ENCODE measurements at regions of chr10 and their contacts with region 1.

Region 1: GRCh38 chr10:103712570-103713498 is 142.5 kb downstream of the SH3PXD2A start:
- DNase-seq: peak; percentile 74 to 89
- ATAC-seq: peak; percentile 84 to 98 (median 95)
- H3K4me3 ChIP-seq: no peak overlapping the region
- H3K4me3 Mint-ChIP-seq: no peak overlapping the region
- H3K27ac ChIP-seq: no peak overlapping the region
- H3K27ac Mint-ChIP-seq: no peak overlapping the region
- H3K4me1 ChIP-seq: no peaks in the 10 kb centered on the region
- H3K4me1 Mint-ChIP-seq: no peaks in the 10 kb centered on the region
- H3K27me3 ChIP-seq: no peaks in the 10 kb centered on the region
- H3K27me3 Mint-ChIP-seq: no peaks in the 10 kb centered on the region
- CTCF ChIP-seq: peak; percentile 86

Region 2: GRCh38 chr10:103859161-103860086 is 146.6 kb after region 1 on chr10:
- intact Hi-C with region 1: loop called (anchors 1 kb)
- DNase-seq: peak; percentile 36 to 75
- ATAC-seq: peak in 2 of 3 donors; percentile 66 to 73
- H3K4me3 ChIP-seq: no peak overlapping the region
- H3K4me3 Mint-ChIP-seq: no peak overlapping the region
- H3K27ac ChIP-seq: no peak overlapping the region
- H3K27ac Mint-ChIP-seq: no peak overlapping the region
- H3K4me1 ChIP-seq: peaks cover 13% of the 10 kb centered on the region
- H3K4me1 Mint-ChIP-seq: peaks cover 0 to 14% of the 10 kb centered on the region in 2 donors
- H3K27me3 ChIP-seq: peaks cover 12% of the 10 kb centered on the region
- H3K27me3 Mint-ChIP-seq: peaks cover 18 to 20% of the 10 kb centered on the region in 2 donors
- CTCF ChIP-seq: peak; percentile 69

Region 3: DNA sequence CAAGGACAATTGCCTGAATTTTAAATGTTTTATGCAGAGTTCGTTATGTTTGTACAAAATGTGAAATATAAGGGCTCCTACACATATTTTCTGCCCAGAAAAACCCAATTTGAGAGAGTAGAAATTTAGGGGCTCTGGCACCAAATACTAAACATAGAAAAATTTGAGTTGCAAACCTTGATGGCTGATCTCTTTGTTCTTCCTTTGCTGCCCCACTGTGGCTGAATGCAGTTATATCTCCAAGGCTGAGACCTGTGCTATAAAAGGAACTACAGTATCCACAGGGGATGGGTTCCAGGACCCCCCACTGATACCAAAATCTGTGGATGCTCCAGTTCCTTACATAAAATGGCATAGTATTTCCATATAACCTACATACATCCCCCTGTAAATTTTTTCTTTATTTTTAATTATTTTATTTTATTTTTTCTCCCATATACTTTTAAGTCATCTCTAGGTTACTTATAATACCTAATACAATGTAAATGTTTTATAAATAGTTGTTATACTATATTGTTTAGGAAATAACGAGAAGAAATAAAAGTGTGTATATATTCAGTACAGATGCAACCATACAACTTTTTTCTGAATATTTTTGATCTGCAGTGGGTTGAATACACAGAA is 496.9 kb after region 1 on chr10:
- intact Hi-C with region 1: loop called (anchors 1 kb)
- DNase-seq: peak in 1 of 2 donors; percentile 71
- ATAC-seq: peak in 2 of 3 donors; percentile 47 to 64
- H3K4me3 ChIP-seq: no peak overlapping the region
- H3K4me3 Mint-ChIP-seq: no peak overlapping the region
- H3K27ac ChIP-seq: no peak overlapping the region
- H3K27ac Mint-ChIP-seq: no peak overlapping the region
- H3K4me1 ChIP-seq: no peaks in the 10 kb centered on the region
- H3K4me1 Mint-ChIP-seq: no peaks in the 10 kb centered on the region
- H3K27me3 ChIP-seq: no peaks in the 10 kb centered on the region
- H3K27me3 Mint-ChIP-seq: peaks cover 20 to 27% of the 10 kb centered on the region in 2 donors
- CTCF ChIP-seq: peak; percentile 30

Region 4: DNA sequence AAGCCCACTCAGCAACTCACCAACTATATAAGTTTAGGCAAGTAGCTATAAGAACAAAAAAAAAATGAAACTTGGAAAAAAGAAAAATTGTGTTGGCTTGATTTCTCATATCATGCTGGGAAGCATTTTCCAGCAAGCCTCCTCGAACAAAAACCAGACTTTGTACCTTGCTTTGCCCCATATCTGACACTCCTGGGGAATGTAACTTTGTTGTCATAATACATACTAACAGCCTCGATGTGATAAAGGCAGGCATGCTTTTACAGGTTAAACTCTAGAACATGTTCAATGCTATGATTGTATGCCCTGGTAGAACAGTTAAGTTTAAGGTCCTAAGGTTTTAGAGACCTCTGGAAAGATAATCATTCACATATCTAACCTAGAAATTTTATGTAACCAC is 507.7 kb after region 1 on chr10:
- intact Hi-C with region 1: no loop called
- DNase-seq: no peak
- ATAC-seq: no peak
- H3K4me3 ChIP-seq: no peak overlapping the region
- H3K4me3 Mint-ChIP-seq: no peak overlapping the region
- H3K27ac ChIP-seq: no peak overlapping the region
- H3K27ac Mint-ChIP-seq: no peak overlapping the region
- H3K4me1 ChIP-seq: peaks cover 6% of the 10 kb centered on the region
- H3K4me1 Mint-ChIP-seq: peaks cover 0 to 5% of the 10 kb centered on the region in 2 donors
- H3K27me3 ChIP-seq: peaks cover 4% of the 10 kb centered on the region
- H3K27me3 Mint-ChIP-seq: peaks cover 20 to 22% of the 10 kb centered on the region in 2 donors
- CTCF ChIP-seq: no peak

Measured in natural killer cell (primary cell).